PC-9 (cell line): ENCODE measurements at regions of chr5 and their contacts with region 1.

Region 1: GRCh38 chr5:150458819-150459557 is 9.4 kb upstream of the RPS14 start:
- DNase-seq: peak in 1 of 2 experiments; percentile 90
- H3K4me3 ChIP-seq: no peak overlapping the region
- H3K27ac ChIP-seq: no peak overlapping the region
- H3K4me1 ChIP-seq: 0 out of 2 replicates have a peak, but pooled peaks cover 10% of the 10 kb centered on the region
- H3K27me3 ChIP-seq: no peaks in the 10 kb centered on the region
- CTCF ChIP-seq: peak; percentile 80

Region 2: GRCh38 chr5:150022163-150022540 is 436.8 kb before region 1 on chr5:
- CTCF ChIA-PET with region 1: interaction called, 10 read pairs
- POLR2A ChIA-PET with region 1: no interaction called
- intact Hi-C with region 1: no loop called
- DNase-seq: peak; percentile 53 to 91
- H3K4me3 ChIP-seq: peak overlapping the region; percentile 33; the same call in 1 of the 2 replicates
- H3K27ac ChIP-seq: peak overlapping the region; percentile 93
- H3K4me1 ChIP-seq: peaks cover 59% of the 10 kb centered on the region
- H3K27me3 ChIP-seq: no peaks in the 10 kb centered on the region
- CTCF ChIP-seq: no peak

Region 3: GRCh38 chr5:150227606-150228273 is 231.2 kb before region 1 on chr5:
- CTCF ChIA-PET with region 1: no interaction called
- POLR2A ChIA-PET with region 1: no interaction called
- intact Hi-C with region 1: no loop called
- DNase-seq: peak in 1 of 2 experiments; percentile 18
- H3K4me3 ChIP-seq: no peak overlapping the region
- H3K27ac ChIP-seq: no peak overlapping the region
- H3K4me1 ChIP-seq: peaks cover 8% of the 10 kb centered on the region; the same call in 1 of the 2 replicates
- H3K27me3 ChIP-seq: no peaks in the 10 kb centered on the region
- CTCF ChIP-seq: no peak

Region 4: GRCh38 chr5:150523472-150524350 is 64.7 kb after region 1 on chr5:
- CTCF ChIA-PET with region 1: no interaction called
- POLR2A ChIA-PET with region 1: no interaction called
- intact Hi-C with region 1: loop called (anchors 1 kb)
- DNase-seq: peak; percentile 27 to 47
- H3K4me3 ChIP-seq: no peak overlapping the region
- H3K27ac ChIP-seq: no peak overlapping the region
- H3K4me1 ChIP-seq: peaks cover under 1% of the 10 kb centered on the region; the same call in 1 of the 2 replicates
- H3K27me3 ChIP-seq: no peaks in the 10 kb centered on the region
- CTCF ChIP-seq: peak; percentile 70

Region 5: GRCh38 chr5:150544611-150545219 is 85.7 kb after region 1 on chr5:
- CTCF ChIA-PET with region 1: interaction called, 11 read pairs
- POLR2A ChIA-PET with region 1: no interaction called
- intact Hi-C with region 1: loop called (anchors 1 kb)
- DNase-seq: peak in 1 of 2 experiments; percentile 63
- H3K4me3 ChIP-seq: no peak overlapping the region
- H3K27ac ChIP-seq: no peak overlapping the region
- H3K4me1 ChIP-seq: no peaks in the 10 kb centered on the region
- H3K27me3 ChIP-seq: no peaks in the 10 kb centered on the region
- CTCF ChIP-seq: peak; percentile 87

Region 6: DNA sequence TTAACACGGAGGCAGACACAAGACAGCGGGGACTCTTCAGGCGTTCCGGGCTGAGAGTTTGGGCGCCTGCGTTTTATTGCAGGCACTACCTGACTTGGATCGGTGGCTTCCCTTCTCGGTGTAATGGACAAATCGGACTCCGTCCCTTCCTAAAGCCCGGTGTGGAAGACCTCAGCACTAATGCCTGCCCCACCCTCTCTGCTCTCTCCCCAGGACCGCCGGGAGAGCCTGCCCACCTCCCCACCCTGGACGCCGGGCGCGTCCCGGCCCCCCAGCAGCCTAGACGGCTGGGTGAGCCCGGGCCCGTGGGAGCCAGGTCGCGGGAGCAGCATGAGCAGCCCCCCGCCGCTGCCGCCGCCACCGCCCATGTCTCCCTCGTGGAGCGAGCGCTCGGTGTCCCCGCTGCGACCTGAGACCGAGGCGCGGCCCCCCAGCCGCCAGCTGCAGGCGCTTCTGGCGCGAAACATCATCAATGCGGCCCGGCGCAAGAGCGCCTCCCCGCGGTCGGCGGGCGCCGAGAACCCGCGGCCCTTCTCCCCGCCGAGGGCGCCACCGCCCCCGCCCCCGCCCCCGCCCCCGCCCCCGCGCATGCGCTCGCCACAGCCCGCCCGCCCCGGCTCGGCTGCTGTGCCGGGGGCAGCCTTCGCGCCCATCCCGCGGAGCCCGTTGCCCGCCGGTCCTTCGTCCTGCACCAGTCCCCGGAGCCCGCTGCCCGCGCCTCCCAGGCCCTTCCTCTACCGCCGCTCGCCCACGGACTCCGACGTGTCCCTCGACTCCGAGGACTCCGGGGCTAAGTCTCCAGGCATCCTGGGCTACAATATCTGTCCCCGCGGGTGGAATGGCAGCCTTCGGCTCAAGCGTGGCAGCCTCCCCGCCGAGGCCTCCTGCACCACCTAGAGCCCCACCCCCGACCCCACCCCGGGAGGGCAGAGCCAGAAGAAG is 197.5 kb after region 1 on chr5:
- CTCF ChIA-PET with region 1: interaction called, 4 read pairs
- POLR2A ChIA-PET with region 1: no interaction called
- intact Hi-C with region 1: loop called (anchors 5 kb)
- DNase-seq: peak in 1 of 2 experiments; percentile 80
- H3K4me3 ChIP-seq: peak overlapping the region; percentile 58; the same call in 1 of the 2 replicates
- H3K27ac ChIP-seq: no peak overlapping the region
- H3K4me1 ChIP-seq: 0 out of 2 replicates have a peak, but pooled peaks cover 3% of the 10 kb centered on the region
- H3K27me3 ChIP-seq: peaks cover 4% of the 10 kb centered on the region; the same call in 1 of the 2 replicates
- CTCF ChIP-seq: peak; percentile 65

Region 7: GRCh38 chr5:150758531-150759333 is 299.7 kb after region 1 on chr5 and contains the start of gene DCTN4:
- CTCF ChIA-PET with region 1: interaction called, 10 read pairs
- POLR2A ChIA-PET with region 1: no interaction called
- intact Hi-C with region 1: no loop called
- DNase-seq: peak; percentile 94 to 97
- H3K4me3 ChIP-seq: peak within 1 kb of the TSS; percentile 79
- H3K27ac ChIP-seq: peak within 1 kb of the TSS; percentile 73
- H3K4me1 ChIP-seq: peaks cover 24% of the 10 kb centered on the region
- H3K27me3 ChIP-seq: no peaks in the 10 kb centered on the region
- CTCF ChIP-seq: peak; percentile 55; the same call in 1 of the 2 replicates
- total RNA-seq, gene DCTN4: 49.1 and 54.1 TPM in 2 replicates

Region 8: DNA sequence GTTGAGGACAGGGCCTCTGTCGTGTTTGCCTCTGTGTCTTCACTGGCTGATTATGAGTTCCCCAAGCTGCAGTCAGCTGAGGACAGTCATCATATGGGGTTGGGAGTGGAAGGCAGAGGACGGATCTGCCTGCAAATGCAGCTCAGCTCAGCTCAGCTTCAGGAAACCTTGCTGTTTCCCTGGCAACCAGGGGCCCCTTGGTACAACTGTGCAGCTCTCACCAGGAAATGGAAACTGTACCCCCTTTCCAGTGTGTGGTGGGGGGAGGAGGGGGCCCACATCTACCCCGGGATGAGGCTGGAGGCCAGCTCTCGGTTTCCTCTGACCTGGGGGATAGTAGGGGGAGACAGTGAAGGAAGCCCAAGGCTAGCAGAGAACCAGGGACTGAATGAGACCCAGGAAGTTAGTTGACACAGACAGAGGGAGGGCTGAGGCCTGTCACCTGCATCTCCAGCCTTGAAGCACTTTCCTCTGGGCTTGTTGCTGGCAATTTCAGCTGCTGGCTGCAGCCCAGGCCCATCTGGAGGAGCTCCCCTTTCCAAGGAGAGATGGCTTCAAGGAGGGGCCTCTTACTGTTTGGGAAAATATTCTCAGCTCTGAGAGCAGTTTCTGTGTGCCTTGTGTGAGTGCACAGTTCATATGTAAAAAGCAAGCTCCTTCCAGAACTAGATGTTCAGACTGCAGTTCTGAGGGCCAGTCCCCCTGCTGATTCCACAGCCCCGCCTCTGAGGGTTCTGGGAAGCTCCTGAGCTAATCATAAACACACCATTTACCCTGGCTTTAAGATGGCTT is 691.7 kb after region 1 on chr5:
- CTCF ChIA-PET with region 1: no interaction called
- POLR2A ChIA-PET with region 1: no interaction called
- intact Hi-C with region 1: no loop called
- DNase-seq: no peak
- H3K4me3 ChIP-seq: no peak overlapping the region
- H3K27ac ChIP-seq: no peak overlapping the region
- H3K4me1 ChIP-seq: no peaks in the 10 kb centered on the region
- H3K27me3 ChIP-seq: no peaks in the 10 kb centered on the region
- CTCF ChIP-seq: no peak